B cell (primary cell): ENCODE measurements at regions of chr17 and their contacts with region 1.

Region 1: DNA sequence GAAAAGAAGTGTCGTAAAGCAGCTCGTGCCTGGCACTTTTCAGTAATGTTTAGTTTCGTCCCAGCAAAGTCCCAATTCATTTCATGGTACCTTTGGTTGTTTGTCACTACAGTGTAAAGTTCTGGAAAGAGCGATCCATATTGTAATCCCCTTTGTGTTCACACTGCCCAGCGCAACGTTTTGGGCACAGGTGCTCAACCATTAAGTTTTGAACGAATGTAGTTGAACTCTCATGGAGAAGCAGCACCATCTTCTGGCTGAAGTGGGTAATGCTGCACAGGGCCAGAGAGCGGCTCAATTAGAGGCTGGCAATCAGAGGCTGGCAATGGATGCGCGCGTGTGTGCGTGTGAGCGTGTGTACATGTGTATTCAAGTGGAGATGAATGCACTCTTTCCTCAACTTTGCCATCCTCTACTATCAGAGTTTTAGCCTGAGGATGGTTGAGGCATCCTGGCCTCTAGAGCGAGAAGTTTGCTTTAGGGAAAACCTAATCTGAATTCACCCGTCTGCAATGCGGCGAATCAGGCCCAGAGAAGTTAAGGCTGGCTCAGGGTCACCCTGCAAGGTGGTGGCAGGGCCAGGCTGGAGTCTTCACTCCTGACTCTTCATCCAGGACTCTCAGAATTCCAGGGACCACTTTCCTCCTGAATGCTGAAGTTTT is 29.9 kb downstream of the DYNLL2 start:
- DNase-seq: peak; percentile 83
- ATAC-seq: peak; percentile 94
- H3K4me3 ChIP-seq: no peak overlapping the region
- H3K4me3 Mint-ChIP-seq: no peak overlapping the region
- H3K27ac ChIP-seq: no peak overlapping the region
- H3K27ac Mint-ChIP-seq: peak overlapping the region; percentile 5
- H3K4me1 ChIP-seq: no peaks in the 10 kb centered on the region
- H3K4me1 Mint-ChIP-seq: no peaks in the 10 kb centered on the region
- H3K27me3 ChIP-seq: peaks cover 0 to 16% (median 6%) of the 10 kb centered on the region in 4 experiments
- H3K27me3 Mint-ChIP-seq: peaks cover 51% of the 10 kb centered on the region
- CTCF ChIP-seq: peak; percentile 95

Region 2: DNA sequence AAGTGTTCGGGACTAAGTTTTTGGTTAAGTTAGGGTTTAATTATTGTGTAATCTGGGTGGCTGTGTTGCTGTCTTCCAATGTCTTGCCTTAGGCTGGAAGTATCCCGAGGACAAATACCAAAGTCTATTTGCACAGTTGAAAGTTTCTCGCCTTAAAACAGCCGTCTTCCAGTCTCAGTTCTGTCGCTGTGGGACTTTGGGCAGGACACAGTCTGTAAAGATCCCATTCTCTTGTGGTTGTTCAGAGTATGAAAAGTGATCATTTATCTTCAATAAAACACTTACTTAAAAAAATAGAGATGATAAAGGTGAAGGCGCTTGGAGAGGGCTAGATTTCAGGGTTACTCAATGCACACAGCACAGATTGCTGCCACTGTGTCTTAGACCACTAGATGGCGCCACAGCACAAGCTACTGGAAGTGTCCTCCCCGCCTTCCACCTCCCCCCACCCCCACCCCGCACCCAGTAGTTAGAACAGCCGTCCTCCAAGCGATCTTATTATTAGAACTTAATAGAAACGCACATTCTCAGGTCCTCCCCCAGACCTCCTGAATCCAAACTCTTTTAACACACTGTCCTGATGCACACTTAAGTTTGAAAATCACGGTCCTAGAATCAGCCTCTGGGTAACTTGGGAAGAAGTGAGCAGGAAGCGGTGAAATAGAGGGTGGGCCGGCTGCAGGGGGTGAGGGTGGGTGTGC is 982.2 kb before region 1 on chr17:
- CTCF ChIA-PET with region 1: interaction called, 6 read pairs
- POLR2A ChIA-PET with region 1: no interaction called
- intact Hi-C with region 1: loop called (anchors 1 kb)
- DNase-seq: peak; percentile 85
- ATAC-seq: peak; percentile 98
- H3K4me3 ChIP-seq: no peak overlapping the region
- H3K4me3 Mint-ChIP-seq: no peak overlapping the region
- H3K27ac ChIP-seq: no peak overlapping the region
- H3K27ac Mint-ChIP-seq: no peak overlapping the region
- H3K4me1 ChIP-seq: peaks cover 8 to 14% of the 10 kb centered on the region in 2 donors
- H3K4me1 Mint-ChIP-seq: peaks cover 15% of the 10 kb centered on the region
- H3K27me3 ChIP-seq: no peaks in the 10 kb centered on the region
- H3K27me3 Mint-ChIP-seq: peaks cover 22% of the 10 kb centered on the region
- CTCF ChIP-seq: peak; percentile 87

Region 3: DNA sequence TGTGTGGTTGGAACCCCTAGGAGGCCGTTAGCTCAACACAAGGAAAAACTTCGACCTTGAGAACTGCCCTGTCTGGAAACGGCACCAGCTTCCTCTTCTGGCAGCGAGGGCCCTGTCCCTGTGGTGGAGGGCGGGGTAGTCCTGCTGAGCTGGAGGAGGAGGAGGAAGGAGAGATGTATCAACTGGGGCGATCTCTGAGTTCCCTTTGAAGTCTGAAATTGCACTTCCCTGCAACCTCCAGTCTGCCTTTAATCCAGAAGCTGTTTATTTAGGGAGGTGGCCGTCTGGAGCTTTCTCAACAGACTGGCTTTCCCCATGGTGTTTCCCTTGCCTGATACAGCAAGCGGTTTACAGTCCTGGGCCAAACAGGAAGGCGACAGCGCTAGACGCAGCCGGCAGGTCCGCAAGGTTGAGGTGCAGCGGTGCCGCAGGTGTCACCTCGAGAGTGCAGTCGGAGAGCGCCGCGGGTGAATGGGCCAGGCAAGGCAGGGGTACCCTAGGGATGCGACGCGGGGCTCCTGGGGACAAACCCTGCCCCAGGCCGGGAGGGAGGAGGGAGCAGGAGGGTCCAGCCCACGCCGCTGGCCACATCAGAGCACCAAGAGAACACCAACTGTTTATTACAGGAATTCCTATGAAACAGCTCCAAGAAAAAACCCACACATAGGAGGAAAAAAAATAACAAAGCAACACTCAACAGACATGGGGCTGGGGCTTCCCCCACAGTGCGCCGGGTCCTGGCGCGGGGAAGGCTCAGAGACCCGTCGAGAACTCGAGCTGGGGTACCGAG is 251.9 kb before region 1 on chr17:
- CTCF ChIA-PET with region 1: interaction called, 118 read pairs
- POLR2A ChIA-PET with region 1: no interaction called
- intact Hi-C with region 1: no loop called
- DNase-seq: peak; percentile 62
- ATAC-seq: peak; percentile 60
- H3K4me3 ChIP-seq: peak overlapping the region; percentile 3 to 59 (median 39)
- H3K4me3 Mint-ChIP-seq: peak overlapping the region; percentile 90
- H3K27ac ChIP-seq: no peak overlapping the region
- H3K27ac Mint-ChIP-seq: peak overlapping the region; percentile 11
- H3K4me1 ChIP-seq: peaks cover 17 to 20% of the 10 kb centered on the region in 2 donors
- H3K4me1 Mint-ChIP-seq: peaks cover 16% of the 10 kb centered on the region
- H3K27me3 ChIP-seq: peaks cover 0 to 51% (median 19%) of the 10 kb centered on the region in 4 experiments
- H3K27me3 Mint-ChIP-seq: peaks cover 23% of the 10 kb centered on the region
- CTCF ChIP-seq: no peak

Region 4: GRCh38 chr17:57892146-57892828 is 220.8 kb before region 1 on chr17:
- CTCF ChIA-PET with region 1: interaction called, 52 read pairs
- POLR2A ChIA-PET with region 1: no interaction called
- intact Hi-C with region 1: loop called (anchors 1 kb)
- DNase-seq: peak; percentile 80
- ATAC-seq: peak; percentile 93
- H3K4me3 ChIP-seq: no peak overlapping the region
- H3K4me3 Mint-ChIP-seq: no peak overlapping the region
- H3K27ac ChIP-seq: no peak overlapping the region
- H3K27ac Mint-ChIP-seq: peak overlapping the region; percentile 11
- H3K4me1 ChIP-seq: peaks cover 0 to 3% of the 10 kb centered on the region in 2 donors
- H3K4me1 Mint-ChIP-seq: peaks cover 5% of the 10 kb centered on the region
- H3K27me3 ChIP-seq: peaks cover 0 to 35% (median 12%) of the 10 kb centered on the region in 4 experiments
- H3K27me3 Mint-ChIP-seq: peaks cover 41% of the 10 kb centered on the region
- CTCF ChIP-seq: peak; percentile 96

Region 5: DNA sequence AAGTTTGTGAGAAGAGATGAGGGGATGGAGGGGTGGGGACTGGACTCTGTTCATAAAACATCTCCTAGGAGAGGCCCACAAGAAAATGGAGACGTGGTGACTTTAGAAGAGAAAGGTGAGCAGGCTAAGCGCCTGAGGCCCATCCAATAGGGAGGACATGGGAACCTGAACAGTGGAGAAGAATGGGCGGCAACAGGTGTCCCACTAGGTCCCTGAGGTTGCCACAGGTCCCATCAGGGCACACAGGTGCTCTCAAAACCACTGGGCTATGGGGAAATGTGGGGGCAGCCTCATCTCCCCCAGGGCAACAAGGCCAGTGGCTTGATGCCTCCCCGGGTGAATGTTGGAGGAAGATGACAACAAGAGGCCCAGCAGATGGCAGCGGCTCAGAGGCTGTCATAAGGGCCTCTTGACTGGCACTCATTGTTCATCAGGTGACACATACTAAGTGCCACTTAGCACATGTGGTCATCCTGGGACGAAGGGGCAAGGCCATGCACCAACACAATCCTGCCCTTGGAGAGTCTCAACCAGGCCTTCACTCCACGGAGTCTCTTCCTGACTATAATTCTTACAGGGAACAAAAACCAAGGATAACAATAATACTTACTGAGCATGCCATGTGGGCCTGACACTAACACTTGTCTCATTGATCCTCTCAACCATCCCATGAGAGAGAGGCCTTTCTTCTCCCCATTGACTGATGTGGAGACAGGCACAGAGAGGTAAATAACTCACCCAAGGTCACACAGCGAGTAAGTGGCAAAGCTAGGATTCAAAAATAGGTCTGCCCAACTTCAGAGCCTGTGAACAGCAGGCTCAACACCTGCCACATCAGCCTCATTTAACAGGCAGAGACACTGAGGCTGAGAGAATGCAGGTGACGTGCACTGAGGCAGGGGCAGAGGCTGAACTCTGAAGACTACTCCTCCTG is 195.9 kb before region 1 on chr17:
- CTCF ChIA-PET with region 1: interaction called, 5 read pairs
- POLR2A ChIA-PET with region 1: no interaction called
- intact Hi-C with region 1: loop called (anchors 1 kb)
- DNase-seq: peak; percentile 61
- ATAC-seq: peak; percentile 71
- H3K4me3 ChIP-seq: no peak overlapping the region
- H3K4me3 Mint-ChIP-seq: no peak overlapping the region
- H3K27ac ChIP-seq: no peak overlapping the region
- H3K27ac Mint-ChIP-seq: no peak overlapping the region
- H3K4me1 ChIP-seq: no peaks in the 10 kb centered on the region
- H3K4me1 Mint-ChIP-seq: no peaks in the 10 kb centered on the region
- H3K27me3 ChIP-seq: peaks cover 0 to 24% (median 13%) of the 10 kb centered on the region in 4 experiments
- H3K27me3 Mint-ChIP-seq: peaks cover 32% of the 10 kb centered on the region
- CTCF ChIP-seq: peak; percentile 37